GM10248 (cell line): ENCODE measurements at regions of chr1 and their contacts with region 1.

Region 1: GRCh38 chr1:204363335-204364124 is 3.8 kb upstream of the PLEKHA6 start:
- DNase-seq: peak; percentile 83
- CTCF ChIP-seq: peak; percentile 86

Region 2: DNA sequence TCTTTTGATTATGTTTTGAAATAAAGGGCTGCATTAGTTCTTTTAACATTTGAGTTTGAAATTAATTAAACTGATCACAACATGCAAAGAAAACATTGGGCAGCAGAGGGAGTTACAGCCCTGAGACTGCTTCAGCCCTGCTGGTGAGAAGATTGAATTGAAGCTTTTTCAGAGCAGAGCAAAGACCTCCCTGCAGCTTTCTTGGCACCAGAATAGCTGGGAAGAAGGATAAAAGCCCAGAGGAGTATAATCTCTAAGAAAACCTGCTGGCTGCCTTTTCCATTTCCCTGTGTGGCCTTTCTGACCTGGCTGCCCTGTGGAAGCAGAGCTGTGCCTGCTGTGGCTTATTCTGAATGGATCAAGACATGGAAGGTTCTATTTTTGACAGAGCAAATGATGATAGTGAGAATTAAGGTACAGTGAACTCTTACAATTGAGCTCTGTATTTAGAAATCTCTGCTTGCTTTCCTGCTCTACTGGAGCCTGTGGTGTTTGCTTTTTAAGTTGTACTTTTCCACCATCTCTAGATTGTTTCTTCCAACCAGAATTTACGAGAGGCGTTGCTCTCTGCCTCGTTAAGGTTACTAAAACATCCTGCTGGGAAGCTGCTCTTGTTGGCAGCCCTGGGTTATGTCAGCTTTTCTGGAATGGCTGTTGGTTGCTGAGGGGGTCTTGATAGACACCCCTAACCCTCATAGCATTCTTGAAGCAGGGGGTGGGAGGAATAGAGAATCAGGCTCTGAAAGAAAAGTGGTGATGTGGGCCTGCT is 492.2 kb before region 1 on chr1:
- CTCF ChIA-PET with region 1: interaction called, 18 read pairs
- POLR2A ChIA-PET with region 1: no interaction called
- DNase-seq: peak; percentile 32
- CTCF ChIP-seq: peak; percentile 58

Region 3: DNA sequence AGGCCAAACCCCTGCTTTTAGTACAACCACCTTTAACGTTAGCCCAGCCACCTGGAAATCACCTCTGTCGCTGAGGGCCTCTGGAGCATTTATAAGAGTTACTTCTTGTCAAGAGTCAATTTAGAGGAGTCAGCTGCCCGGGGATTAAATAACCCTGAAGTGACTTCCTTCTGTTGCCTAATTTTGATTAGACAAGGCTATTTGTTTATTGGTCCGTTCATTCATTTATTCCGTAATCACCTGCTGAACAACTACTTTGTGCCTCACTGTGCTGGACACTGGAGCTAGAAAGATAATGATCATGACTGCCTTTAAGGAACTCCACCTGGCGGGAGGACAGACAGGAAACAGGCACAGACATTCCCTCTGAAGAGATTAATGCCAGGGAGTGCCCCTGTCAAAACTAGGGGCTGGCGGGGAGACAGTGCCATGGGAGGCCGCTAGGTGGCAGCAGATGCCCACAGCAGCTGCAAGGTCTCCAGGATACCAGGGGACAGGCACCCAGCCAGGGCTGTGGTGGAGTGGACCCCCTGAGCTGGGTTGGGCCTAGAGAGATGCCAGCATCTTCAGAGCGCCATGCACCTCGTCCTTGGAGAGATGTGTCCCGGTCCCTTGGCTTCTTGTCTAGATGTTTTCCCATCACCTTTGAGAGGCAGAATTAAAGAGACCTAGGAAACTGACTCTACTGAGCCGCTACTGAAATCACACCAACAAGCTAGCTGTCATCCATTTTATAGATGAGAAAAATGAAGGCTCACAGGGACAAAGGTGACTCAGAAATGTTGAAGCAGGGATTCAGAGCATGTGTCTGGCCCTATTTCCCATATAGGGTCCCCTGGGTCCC is 201.1 kb before region 1 on chr1:
- CTCF ChIA-PET with region 1: interaction called, 110 read pairs
- POLR2A ChIA-PET with region 1: no interaction called
- DNase-seq: peak; percentile 85
- CTCF ChIP-seq: peak; percentile 98

Region 4: DNA sequence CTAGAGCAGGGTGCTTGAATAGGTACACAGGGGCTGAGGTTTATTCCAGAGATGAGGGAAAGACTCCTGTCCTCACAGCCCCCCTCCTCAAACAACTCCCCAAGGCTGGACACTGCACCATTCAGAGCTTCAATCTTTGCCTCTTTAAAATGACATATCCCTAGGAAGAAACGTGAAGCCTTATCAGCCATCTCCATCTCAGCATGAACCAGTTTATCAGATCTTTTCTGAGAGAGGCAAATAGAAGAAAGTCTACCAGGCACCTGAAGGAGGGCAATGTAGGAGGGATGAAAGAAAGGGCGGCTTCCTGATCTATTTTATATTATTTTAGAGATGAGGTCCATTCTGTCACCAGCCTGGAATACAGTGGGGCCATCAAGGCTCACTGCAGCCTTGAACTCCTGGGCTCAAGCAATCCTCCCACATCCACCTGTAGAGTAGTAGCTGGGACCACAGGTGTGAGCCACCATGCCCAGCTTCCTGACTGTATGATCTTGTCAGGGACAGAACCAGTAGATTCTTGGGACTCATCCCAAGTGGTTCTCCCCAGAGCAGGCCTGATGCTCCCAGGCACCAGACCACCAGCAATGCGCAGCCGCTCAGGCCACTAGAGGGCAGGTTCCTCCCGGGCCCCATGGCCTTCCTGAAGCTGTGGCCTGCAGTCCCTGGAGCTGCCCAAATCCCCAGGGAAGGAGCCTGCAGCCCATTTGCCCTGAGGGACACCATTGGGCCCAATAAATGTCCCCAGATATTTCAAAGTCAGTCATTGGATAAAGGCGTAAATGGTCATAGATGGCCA is 105.4 kb before region 1 on chr1:
- CTCF ChIA-PET with region 1: interaction called, 28 read pairs
- POLR2A ChIA-PET with region 1: no interaction called
- DNase-seq: peak; percentile 74
- CTCF ChIP-seq: peak; percentile 51

Region 5: DNA sequence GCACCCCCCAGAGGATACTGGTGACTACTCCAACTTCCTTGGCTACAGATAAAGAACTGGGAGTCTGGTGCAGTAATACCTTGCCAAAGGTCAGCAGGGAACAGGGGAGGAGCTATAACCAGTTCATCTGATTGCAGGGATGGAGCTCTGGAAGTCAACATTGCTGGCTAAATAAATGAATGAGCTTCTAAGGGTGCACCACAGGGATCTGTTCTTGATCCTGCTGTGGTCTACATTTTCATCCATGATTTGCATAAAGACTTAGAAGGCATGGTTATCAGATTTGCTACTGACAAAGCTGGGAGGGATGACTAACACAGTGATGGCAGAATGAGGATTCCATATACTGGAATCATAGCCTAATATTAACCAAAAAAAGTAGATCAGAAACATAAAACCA is 22.1 kb before region 1 on chr1:
- CTCF ChIA-PET with region 1: interaction called, 17 read pairs
- POLR2A ChIA-PET with region 1: no interaction called
- DNase-seq: no peak
- CTCF ChIP-seq: no peak

Region 6: GRCh38 chr1:204350857-204351573 is 12.5 kb before region 1 on chr1:
- CTCF ChIA-PET with region 1: interaction called, 55 read pairs
- POLR2A ChIA-PET with region 1: no interaction called
- DNase-seq: no peak
- CTCF ChIP-seq: no peak

Region 7: DNA sequence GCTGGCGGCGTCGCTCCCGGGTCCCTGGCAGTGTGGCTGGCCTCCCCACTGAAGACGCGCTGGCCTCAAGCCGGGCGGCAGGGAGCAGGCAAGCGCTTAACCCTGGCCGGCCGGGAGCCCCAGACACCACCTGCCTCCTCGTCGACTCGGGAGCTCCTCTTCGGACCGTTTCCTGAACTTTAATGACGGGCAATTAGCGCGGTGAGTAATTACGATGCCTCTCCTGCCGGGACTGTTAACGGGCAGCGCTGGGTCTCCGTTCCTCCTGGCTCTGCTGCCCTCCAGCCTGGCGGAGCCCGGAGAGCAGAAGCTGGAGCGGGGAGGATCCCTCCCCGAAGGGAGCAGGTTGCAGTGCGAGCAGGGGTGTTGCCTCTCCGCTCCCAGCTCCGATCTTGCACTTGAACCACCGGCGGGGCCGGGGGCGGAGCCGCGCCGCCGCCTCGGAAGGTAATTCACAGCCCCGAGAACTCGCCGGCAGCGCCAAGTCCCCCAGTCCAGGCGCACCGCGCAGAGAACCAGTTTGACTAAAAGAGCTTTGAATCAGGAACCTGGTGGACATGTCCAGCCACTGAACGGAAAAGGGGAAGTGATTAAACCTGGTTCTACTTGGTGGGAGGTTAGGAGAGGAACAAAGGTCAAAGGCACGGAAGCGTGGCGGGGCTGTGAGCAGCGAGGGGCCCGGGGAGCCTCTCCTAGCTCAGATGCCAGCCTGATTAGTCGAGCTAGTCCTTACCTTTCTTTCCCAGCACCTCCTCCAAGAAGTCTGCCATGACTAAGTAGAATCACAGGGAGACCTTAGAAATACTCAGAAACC is 14.5 kb after region 1 on chr1:
- CTCF ChIA-PET with region 1: interaction called, 75 read pairs
- POLR2A ChIA-PET with region 1: no interaction called
- DNase-seq: peak; percentile 69
- CTCF ChIP-seq: no peak

Region 8: GRCh38 chr1:204424621-204425020 is 61.1 kb after region 1 on chr1:
- CTCF ChIA-PET with region 1: no interaction called
- POLR2A ChIA-PET with region 1: no interaction called
- DNase-seq: no peak
- CTCF ChIP-seq: no peak

Region 9: DNA sequence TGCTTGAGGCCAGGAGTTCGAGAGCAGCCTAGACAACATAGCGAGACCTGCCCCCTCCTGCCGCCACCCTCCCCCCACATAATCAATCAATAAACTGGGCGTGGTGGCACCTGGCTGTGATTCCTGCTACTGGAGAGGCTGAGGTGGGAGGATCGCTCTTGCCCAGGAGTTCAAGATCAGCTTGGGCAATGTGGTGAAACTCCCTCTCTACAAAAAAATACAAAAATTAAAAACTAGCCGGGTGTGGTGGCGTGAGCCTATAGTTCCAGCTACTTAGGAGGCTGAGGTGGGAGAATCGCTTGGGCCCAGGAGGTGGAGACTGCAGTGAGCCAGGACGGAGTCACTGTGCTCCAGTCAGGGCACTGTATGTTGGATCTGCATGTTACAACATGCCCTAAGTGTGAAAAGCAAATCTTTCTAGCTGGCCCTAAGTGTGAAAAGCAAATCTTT is 145.7 kb after region 1 on chr1:
- CTCF ChIA-PET with region 1: no interaction called
- POLR2A ChIA-PET with region 1: no interaction called
- DNase-seq: no peak
- CTCF ChIP-seq: no peak